ENCODE measurements at regions of chr15 and their contacts with region 1.

Region 1: GRCh38 chr15:47196057-47196456 is 521.2 kb upstream of the SEMA6D start:
- DNase-seq: peak; percentile 98
- H3K4me3 ChIP-seq: no peak overlapping the region
- H3K27ac ChIP-seq: peak overlapping the region; percentile 22
- H3K4me1 ChIP-seq: peaks cover 46% of the 10 kb centered on the region
- H3K27me3 ChIP-seq: no peaks in the 10 kb centered on the region
- CTCF ChIP-seq: peak; percentile 88

Region 2: GRCh38 chr15:47404877-47405276 is 208.8 kb after region 1 on chr15:
- CTCF ChIA-PET with region 1: no interaction called
- POLR2A ChIA-PET with region 1: no interaction called
- intact Hi-C with region 1: no loop called
- DNase-seq: no peak
- H3K4me3 ChIP-seq: no peak overlapping the region
- H3K27ac ChIP-seq: no peak overlapping the region
- H3K4me1 ChIP-seq: peaks cover 26% of the 10 kb centered on the region
- H3K27me3 ChIP-seq: no peaks in the 10 kb centered on the region
- CTCF ChIP-seq: no peak

Region 3: DNA sequence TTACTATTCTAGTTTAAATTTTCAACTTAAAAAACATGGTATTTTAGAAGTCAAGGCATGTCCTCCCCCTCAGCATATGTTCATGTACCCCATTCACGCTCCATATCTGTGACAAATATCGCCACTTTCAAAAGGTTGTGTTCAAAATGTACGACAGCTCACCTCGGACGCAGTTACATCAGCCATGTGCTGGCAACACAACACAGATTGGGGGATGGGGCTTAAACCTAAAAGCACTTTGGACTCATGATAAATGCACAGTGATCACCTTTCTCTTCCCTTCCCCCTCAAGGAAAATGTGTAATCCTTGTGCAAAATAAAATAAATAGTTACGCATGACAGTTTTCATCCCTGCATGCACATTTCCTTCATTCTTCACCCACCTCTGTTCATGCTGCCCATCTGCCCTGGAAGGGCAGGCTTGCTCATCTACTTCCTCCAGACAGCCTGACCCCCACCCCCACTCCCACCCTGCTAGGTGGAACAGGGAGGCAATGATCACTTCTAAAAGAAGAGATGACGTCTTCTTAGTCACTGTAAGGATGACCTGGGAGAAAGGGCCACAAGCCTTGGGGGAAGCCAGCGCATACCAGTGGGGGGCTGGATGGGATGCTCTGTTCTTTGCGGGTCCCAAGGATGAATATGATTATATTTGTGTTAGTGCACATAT is 249.8 kb after region 1 on chr15:
- CTCF ChIA-PET with region 1: no interaction called
- POLR2A ChIA-PET with region 1: no interaction called
- intact Hi-C with region 1: no loop called
- DNase-seq: no peak
- H3K4me3 ChIP-seq: no peak overlapping the region
- H3K27ac ChIP-seq: no peak overlapping the region
- H3K4me1 ChIP-seq: no peaks in the 10 kb centered on the region
- H3K27me3 ChIP-seq: no peaks in the 10 kb centered on the region
- CTCF ChIP-seq: no peak

Region 4: GRCh38 chr15:47473832-47474231 is 277.8 kb after region 1 on chr15:
- CTCF ChIA-PET with region 1: no interaction called
- POLR2A ChIA-PET with region 1: no interaction called
- intact Hi-C with region 1: loop called (anchors 5 kb)
- DNase-seq: no peak
- H3K4me3 ChIP-seq: no peak overlapping the region
- H3K27ac ChIP-seq: no peak overlapping the region
- H3K4me1 ChIP-seq: peaks cover 29% of the 10 kb centered on the region
- H3K27me3 ChIP-seq: no peaks in the 10 kb centered on the region
- CTCF ChIP-seq: no peak

Region 5: DNA sequence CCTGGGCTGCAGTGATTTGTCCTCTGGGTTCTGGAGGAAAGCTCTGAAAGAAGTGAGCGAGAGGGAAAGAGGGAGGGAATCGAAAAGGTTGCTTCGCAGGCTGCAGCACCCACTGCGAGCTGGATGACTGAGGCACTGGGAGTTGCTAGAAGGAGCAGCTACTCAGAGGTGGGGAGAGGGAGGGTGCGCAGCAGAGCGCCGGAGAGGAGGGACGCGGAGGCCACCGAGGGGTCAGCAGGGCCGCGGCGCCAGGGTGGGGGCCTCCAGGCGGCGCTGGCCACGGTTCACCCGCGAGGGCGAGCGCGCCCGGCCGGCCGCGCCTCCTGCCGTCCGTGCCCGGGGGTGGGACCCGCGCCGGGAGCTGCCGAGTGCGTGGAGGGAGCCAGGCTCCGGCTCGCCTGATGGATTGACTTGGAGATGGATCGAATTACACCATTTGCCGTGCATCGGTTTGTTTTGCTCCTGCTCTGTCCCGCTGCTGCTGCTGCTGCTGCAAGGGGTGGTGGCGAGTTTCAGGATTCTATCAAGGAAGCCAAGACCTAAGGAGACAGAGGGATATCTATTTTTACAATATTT is 521.1 kb after region 1 on chr15 and contains the start of gene SEMA6D:
- CTCF ChIA-PET with region 1: interaction called, 4 read pairs
- POLR2A ChIA-PET with region 1: interaction called, 5 read pairs
- intact Hi-C with region 1: loop called (anchors 2 kb)
- DNase-seq: peak; percentile 90
- H3K4me3 ChIP-seq: peak within 1 kb of the TSS; percentile 76
- H3K27ac ChIP-seq: peak within 1 kb of the TSS; percentile 69
- H3K4me1 ChIP-seq: peaks cover 50% of the 10 kb centered on the region
- H3K27me3 ChIP-seq: no peaks in the 10 kb centered on the region
- CTCF ChIP-seq: no peak; the same call in 1 of the 2 replicates
- total RNA-seq, gene SEMA6D: 10.9 and 11.0 TPM in 2 replicates

Region 6: DNA sequence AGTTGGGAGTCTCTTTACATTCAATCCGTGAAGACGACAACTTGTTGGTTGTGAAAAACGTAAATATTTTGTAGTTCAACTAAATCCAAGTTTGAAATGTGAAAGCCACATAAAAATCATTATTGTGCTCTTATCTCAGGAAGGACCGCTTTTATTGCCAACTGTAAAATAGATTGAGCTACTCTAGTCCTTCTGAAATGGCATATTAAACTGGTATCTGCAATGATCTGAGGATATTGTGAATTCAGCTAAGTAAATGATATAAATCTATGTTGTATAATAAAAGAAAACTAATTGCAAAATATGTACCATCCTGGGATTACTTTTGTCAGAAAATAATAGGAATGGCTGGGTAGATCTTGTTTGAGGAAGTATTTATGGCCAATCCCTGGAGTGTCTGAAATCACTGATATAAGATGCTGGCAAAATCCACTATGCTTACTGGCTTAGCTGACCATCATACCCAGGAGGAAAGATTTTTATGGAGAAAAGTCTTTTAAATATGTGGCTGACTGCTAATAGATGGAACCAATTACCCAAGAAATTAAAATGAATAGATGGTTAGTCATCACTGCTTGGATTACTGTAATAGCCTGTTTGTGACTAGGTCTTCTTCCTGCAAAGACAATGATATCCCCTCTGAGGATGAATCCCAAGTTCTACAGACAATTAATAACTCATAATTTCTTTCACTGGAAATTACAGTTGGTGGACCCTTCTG is 713.1 kb after region 1 on chr15:
- CTCF ChIA-PET with region 1: no interaction called
- POLR2A ChIA-PET with region 1: no interaction called
- intact Hi-C with region 1: no loop called
- DNase-seq: peak; percentile 80
- H3K4me3 ChIP-seq: no peak overlapping the region
- H3K27ac ChIP-seq: no peak overlapping the region
- H3K4me1 ChIP-seq: peaks cover 31% of the 10 kb centered on the region
- H3K27me3 ChIP-seq: no peaks in the 10 kb centered on the region
- CTCF ChIP-seq: no peak

Region 7: GRCh38 chr15:48250640-48251076 is 1054.6 kb after region 1 on chr15:
- CTCF ChIA-PET with region 1: no interaction called
- POLR2A ChIA-PET with region 1: no interaction called
- intact Hi-C with region 1: loop called (anchors 10 kb)
- DNase-seq: peak; percentile 87
- H3K4me3 ChIP-seq: no peak overlapping the region
- H3K27ac ChIP-seq: no peak overlapping the region
- H3K4me1 ChIP-seq: no peaks in the 10 kb centered on the region
- H3K27me3 ChIP-seq: no peaks in the 10 kb centered on the region
- CTCF ChIP-seq: peak; percentile 76